PC-9 (cell line): ENCODE measurements at regions of chr19 and their contacts with region 1.

Region 1: DNA sequence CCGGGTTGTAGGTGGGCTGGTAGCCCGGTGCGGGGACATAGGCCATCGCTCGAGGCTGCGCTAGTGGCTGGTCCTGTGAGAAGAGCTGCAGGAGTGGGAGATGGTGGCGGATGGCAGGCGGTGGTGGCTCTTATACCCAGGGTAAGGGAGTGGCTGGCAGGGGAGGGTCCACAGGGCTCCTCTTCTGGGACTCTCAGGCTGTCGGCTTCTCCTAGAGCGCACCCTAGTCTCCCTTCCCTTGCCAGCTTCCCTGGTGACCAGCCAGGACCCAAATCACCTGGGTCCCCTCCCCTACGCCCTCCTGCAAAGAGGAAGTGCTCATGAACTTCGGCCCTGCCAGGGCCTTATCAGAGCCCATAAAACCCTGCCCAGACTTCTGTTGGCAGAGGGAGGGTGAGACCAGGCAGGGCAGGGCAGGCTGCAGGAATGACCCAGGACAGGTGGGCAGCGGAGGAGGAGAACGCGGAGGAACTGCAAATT is at the start of gene LGALS4:
- DNase-seq: no peak
- H3K4me3 ChIP-seq: no peak within 1 kb of the TSS
- H3K27ac ChIP-seq: no peak within 1 kb of the TSS
- H3K4me1 ChIP-seq: no peaks in the 10 kb centered on the region
- H3K27me3 ChIP-seq: no peaks in the 10 kb centered on the region
- CTCF ChIP-seq: no peak
- total RNA-seq, gene LGALS4: 1.0 and 2.2 TPM in 2 replicates

Region 2: DNA sequence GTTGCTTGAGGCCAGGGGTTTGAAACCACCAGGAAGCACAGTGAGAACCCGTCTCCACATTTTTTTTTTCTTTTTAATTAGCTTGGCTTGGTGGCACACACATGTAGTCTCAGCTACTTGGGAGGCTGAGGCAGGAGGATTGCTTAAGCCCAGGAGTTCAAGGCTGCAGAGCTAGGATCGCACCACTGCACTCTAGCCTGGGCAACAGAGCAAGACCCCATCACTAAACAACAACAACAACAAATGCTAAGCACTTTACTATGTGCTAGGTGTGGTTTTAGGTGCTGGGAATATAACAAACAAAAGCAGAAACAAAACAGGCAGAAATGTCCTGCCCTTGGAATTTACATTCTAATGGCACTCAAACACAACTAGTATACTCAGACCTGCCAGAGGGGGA is 328.1 kb before region 1 on chr19:
- CTCF ChIA-PET with region 1: interaction called, 15 read pairs
- POLR2A ChIA-PET with region 1: no interaction called
- intact Hi-C with region 1: no loop called
- DNase-seq: no peak
- H3K4me3 ChIP-seq: no peak overlapping the region
- H3K27ac ChIP-seq: no peak overlapping the region
- H3K4me1 ChIP-seq: no peaks in the 10 kb centered on the region
- H3K27me3 ChIP-seq: peaks cover 82% of the 10 kb centered on the region
- CTCF ChIP-seq: no peak